OCI-LY7 (cell line): ENCODE measurements at regions of chr5 and their contacts with region 1.

Region 1: GRCh38 chr5:81971712-81972495 is at the start of gene ATG10:
- DNase-seq: peak; percentile 92
- H3K4me3 ChIP-seq: peak within 1 kb of the TSS; percentile 85
- H3K27ac ChIP-seq: peak within 1 kb of the TSS; percentile 56
- H3K4me1 ChIP-seq: peaks cover 19% of the 10 kb centered on the region
- CTCF ChIP-seq: no peak
- total RNA-seq, gene ATG10: 5.4 and 11.8 TPM in 2 replicates

Region 2: DNA sequence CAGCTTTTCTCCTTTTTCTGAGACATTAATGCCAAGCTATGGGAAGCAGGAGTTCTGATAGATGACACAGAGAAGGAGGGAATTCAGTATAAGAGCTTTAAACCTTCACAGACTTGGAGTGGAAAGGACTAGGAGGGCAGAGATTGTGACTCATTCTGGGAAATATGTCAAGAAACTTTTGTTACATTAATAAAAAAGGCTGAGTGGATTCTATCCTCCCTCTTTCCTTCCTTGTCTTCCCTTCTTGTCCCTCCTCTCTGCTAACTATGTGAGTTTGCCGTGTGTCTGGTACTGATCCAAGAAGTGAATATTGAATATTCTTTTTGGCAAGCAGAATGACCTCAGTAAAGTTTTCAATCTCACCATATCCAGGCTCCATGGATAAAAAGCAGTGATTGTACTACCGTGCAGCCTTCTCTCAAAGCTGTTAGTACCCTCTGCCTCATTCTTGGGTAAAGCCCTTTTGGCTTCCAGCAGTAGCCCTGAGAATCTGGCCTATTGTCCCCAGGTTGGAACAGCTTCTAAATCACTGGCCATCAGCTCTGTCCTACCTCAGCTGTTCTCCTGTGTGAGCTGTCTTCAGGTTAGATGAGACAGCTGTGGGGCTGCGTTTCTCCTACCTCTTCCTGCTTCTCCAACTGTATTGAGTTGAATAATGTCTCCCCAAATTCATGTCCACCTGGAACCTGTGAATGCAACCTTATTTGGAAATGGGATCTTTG is 73.8 kb after region 1 on chr5:
- CTCF ChIA-PET with region 1: no interaction called
- POLR2A ChIA-PET with region 1: no interaction called
- intact Hi-C with region 1: no loop called
- DNase-seq: no peak
- H3K4me3 ChIP-seq: no peak overlapping the region
- H3K27ac ChIP-seq: no peak overlapping the region
- H3K4me1 ChIP-seq: no peaks in the 10 kb centered on the region
- CTCF ChIP-seq: no peak

Region 3: DNA sequence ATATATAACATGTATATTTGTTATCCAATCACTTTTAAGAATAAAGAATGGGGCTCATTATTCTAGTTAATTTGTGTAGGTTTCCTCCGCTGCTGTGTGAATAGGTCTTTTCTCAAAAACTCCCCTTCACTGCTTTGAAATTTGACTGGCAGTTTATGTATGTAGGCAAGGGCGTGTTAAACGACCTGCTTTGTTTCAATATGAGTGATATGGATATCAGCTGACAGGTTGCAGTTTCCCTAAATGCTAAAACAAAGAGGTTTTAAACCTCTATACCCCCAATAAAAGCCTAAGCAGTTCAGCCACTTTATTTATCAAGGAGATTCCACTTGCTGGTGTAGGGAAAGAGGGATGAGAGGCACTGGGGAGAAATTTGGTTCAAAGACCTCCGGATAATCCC is 945.7 kb after region 1 on chr5:
- CTCF ChIA-PET with region 1: no interaction called
- POLR2A ChIA-PET with region 1: no interaction called
- intact Hi-C with region 1: no loop called
- DNase-seq: no peak
- H3K4me3 ChIP-seq: no peak overlapping the region
- H3K27ac ChIP-seq: no peak overlapping the region
- H3K4me1 ChIP-seq: no peaks in the 10 kb centered on the region
- CTCF ChIP-seq: no peak

Region 4: DNA sequence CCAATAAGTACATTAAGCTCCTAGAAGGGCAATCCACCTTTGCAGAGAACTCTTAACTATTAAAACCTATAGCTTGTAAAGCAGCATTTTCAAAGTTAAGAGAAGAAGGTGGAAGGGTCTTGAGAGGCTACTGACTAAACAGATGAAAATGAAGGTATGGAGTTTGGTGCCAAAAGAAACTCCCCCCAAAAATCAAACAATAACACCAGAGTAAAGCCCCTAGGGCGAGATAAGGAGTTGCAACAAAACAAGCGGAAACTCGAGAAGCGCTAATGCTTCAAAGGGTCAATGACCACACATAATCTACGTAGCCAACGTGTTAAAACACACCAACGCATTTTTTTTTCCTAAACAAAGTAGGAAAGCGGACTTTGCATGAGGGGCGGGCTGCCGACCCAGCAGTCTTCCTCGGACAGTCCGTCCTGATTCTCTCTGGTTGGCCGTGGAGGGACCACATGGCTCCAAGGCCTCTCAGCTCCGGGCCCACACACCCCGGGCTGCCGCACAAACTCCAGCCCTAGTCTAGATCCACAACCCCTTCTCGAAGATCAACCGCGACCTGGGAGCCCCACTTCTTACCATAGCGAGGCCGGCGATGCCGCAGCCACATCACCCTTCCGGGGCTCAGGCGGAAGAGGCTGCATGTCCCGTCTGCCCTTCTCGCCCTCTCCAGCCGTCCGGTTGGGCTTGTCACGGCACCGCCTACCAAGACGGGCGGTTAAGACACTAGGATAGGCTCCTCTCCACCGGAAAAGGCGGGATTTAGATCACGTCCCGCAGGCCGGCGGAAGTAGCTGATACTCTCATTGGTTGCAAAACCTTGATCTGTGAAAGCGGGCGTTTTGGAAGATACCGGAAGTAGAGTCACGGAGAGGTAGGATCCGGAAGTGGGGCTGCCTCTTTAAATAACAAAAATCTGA is 1105.1 kb after region 1 on chr5 and contains the starts of genes TMEM167A and XRCC4:
- CTCF ChIA-PET with region 1: no interaction called
- POLR2A ChIA-PET with region 1: no interaction called
- intact Hi-C with region 1: loop called (anchors 5 kb)
- DNase-seq: peak; percentile 99
- H3K4me3 ChIP-seq: peak within 1 kb of the TSS; percentile 80
- H3K27ac ChIP-seq: peak within 1 kb of the TSS; percentile 76
- H3K4me1 ChIP-seq: peaks cover 14% of the 10 kb centered on the region
- CTCF ChIP-seq: no peak
- total RNA-seq, gene TMEM167A: 17.6 and 20.4 TPM in 2 replicates
- total RNA-seq, gene XRCC4: 14.5 and 18.8 TPM in 2 replicates